Activated CD4-positive, alpha-beta memory T cell treated with anti-CD3 and anti-CD28 coated beads for 36 hours (primary cell): ENCODE measurements at regions of chr6 and their contacts with region 1.

Region 1: DNA sequence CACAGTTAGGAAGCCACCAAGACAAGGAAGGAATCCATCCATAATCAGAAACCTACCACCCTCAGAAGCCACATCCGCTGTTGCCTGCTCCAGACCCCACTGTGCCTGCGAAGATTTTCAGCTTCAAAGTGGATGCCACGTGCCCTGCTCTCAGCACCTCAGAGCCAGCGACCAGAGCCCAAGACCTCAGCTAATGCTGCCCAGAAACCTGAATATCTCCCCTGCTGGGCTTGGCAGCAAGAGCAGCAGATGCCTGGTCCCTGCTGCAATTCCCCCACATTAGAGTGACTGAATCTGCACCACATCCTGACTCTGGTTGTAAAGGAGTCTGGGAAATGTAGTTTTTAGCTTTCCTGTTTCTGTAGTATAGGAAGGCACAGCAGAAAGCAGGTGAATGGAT is 10.7 kb upstream of the ULBP3 start:
- DNase-seq: peak; percentile 45
- H3K4me3 Mint-ChIP-seq: no peak overlapping the region
- H3K27ac Mint-ChIP-seq: no peak overlapping the region
- H3K4me1 Mint-ChIP-seq: peaks cover 17% of the 10 kb centered on the region
- H3K27me3 Mint-ChIP-seq: peaks cover 29% of the 10 kb centered on the region

Region 2: GRCh38 chr6:149840345-149841075 is 239.1 kb before region 1 on chr6:
- CTCF ChIA-PET with region 1: no interaction called
- POLR2A ChIA-PET with region 1: no interaction called
- intact Hi-C with region 1: no loop called
- DNase-seq: peak; percentile 71
- H3K4me3 Mint-ChIP-seq: no peak overlapping the region
- H3K27ac Mint-ChIP-seq: no peak overlapping the region
- H3K4me1 Mint-ChIP-seq: no peaks in the 10 kb centered on the region
- H3K27me3 Mint-ChIP-seq: no peaks in the 10 kb centered on the region

Region 3: GRCh38 chr6:149974825-149975224 is 104.8 kb before region 1 on chr6:
- CTCF ChIA-PET with region 1: no interaction called
- POLR2A ChIA-PET with region 1: no interaction called
- intact Hi-C with region 1: no loop called
- DNase-seq: no peak
- H3K4me3 Mint-ChIP-seq: no peak overlapping the region
- H3K27ac Mint-ChIP-seq: no peak overlapping the region
- H3K4me1 Mint-ChIP-seq: peaks cover 2% of the 10 kb centered on the region
- H3K27me3 Mint-ChIP-seq: peaks cover 52% of the 10 kb centered on the region

Region 4: GRCh38 chr6:150301846-150302519 is 222.4 kb after region 1 on chr6:
- CTCF ChIA-PET with region 1: interaction called, 12 read pairs
- POLR2A ChIA-PET with region 1: no interaction called
- intact Hi-C with region 1: no loop called
- DNase-seq: peak; percentile 46
- H3K4me3 Mint-ChIP-seq: no peak overlapping the region
- H3K27ac Mint-ChIP-seq: no peak overlapping the region
- H3K4me1 Mint-ChIP-seq: peaks cover 8% of the 10 kb centered on the region
- H3K27me3 Mint-ChIP-seq: peaks cover 34% of the 10 kb centered on the region

Region 5: GRCh38 chr6:150334790-150335783 is 255.5 kb after region 1 on chr6:
- CTCF ChIA-PET with region 1: interaction called, 36 read pairs
- POLR2A ChIA-PET with region 1: no interaction called
- intact Hi-C with region 1: loop called (anchors 1 kb)
- DNase-seq: peak; percentile 46
- H3K4me3 Mint-ChIP-seq: no peak overlapping the region
- H3K27ac Mint-ChIP-seq: no peak overlapping the region
- H3K4me1 Mint-ChIP-seq: no peaks in the 10 kb centered on the region
- H3K27me3 Mint-ChIP-seq: peaks cover 20% of the 10 kb centered on the region

Region 6: DNA sequence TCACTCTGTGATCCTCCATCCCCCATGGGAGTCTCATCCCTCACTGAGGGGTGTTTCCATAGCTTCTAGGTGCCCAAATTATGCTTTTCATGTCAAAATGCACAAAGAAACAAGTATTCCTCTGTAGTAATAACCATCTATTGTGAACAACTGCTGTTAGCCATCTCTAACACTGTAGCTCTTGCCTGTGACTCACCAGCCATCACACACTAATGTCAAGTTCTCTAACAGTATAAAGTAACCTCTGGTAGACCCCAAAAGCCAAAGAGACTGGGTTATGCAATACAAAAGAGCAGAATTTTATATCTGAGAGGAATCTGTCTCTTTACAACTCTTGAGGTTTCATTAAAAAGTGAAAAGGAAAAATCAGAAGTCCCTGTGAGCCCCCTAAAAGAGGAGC is 263.8 kb after region 1 on chr6:
- CTCF ChIA-PET with region 1: interaction called, 10 read pairs
- POLR2A ChIA-PET with region 1: no interaction called
- intact Hi-C with region 1: no loop called
- DNase-seq: no peak
- H3K4me3 Mint-ChIP-seq: no peak overlapping the region
- H3K27ac Mint-ChIP-seq: no peak overlapping the region
- H3K4me1 Mint-ChIP-seq: no peaks in the 10 kb centered on the region
- H3K27me3 Mint-ChIP-seq: peaks cover 14% of the 10 kb centered on the region